ENCODE measurements at regions of chr4 and their contacts with region 1.

Region 1: DNA sequence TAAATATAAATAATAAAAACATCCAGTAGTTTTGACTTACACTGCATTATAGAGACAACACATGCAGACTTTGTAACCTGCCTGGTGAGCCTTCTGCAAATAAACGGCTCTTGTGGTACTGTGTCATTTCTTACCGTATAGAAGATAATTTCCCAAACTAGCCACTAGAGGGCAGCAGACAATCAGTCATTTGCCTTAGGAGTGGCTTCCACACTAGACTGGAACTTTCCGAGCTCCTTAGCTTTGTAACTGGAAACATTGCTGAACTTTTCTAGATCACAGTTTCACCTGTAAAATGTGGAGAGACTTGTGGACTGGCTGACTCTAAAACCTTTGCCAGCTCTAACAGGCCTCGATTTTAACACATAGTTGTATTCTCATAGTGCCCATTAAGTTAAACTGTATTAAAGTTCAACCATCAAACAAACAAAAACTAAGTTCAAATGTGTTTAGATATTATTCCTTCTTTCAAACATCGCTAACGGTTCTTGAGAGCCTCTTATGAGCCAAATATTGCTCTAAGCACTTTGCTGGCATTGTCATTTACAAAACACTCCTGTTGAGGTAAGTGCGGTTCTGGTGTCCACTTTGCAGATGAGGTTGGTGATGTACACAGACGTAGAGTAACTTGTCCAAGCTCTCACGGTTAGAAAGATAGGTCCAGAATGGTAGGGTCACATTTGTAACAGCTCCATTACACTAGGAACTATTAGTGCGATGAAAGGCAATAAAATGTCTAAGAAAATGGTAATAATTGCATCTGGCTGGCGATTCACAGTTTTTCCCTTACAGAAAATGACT is 345.5 kb downstream of the ANK2 start:
- DNase-seq: peak in 3 of 10 donors; percentile 18 to 50 (median 43)

Region 2: GRCh38 chr4:112795112-112795511 is 599.8 kb before region 1 on chr4:
- intact Hi-C with region 1: no loop called
- DNase-seq: no peak

Region 3: DNA sequence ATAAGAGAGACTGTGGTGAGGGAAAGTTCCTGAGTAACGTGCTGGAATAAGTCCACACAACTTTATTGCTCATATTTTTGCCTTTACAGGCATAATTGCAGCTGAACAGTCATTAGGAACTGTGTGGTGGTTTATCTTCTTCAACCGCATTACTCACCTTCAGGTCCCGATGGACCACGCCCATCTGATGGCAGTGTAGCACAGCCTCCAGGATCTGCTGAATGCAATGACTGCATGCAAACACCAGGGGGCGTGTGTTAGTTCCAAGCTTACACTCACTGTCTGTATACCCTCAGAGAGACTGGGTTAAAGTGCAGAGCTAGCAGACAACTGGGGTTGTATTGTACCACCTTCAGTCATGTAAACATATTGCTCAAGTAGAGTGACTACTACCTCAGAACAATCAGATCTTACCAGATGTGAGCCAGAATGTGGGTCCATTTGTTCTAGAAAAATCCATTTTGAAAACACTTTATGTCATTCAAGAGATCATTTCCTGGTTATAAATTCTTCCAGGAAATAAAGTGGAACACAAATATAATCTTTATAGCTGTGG is 152.6 kb after region 1 on chr4:
- intact Hi-C with region 1: loop called (anchors 2 kb)
- DNase-seq: peak; percentile 51 to 96 (median 80)

Region 4: GRCh38 chr4:113761620-113762185 is 366.8 kb after region 1 on chr4 and contains the start of gene CAMK2D:
- intact Hi-C with region 1: loop called (anchors 5 kb)
- DNase-seq: peak; percentile 83 to 98 (median 88)

Region 5: DNA sequence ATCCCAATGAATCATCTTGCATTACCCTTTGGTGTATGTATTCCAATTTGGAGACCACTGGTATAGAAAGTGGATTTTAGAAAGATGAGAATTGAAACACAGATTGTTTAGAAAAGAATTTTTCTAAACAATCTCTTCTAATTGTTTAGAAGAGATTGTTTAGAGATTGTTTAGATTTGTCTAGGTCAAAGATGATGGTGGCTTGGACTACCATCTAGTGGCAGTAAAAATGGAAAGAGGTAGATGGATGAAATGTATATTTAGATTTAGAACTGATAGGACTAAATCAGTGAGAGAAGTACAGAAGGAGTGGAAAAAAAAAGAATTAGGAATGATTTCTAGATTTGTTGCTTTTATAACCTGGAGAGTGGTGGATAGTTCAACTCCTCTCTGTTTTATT is 513.9 kb after region 1 on chr4:
- intact Hi-C with region 1: loop called (anchors 5 kb)
- DNase-seq: no peak

Region 6: GRCh38 chr4:114180481-114180880 is 785.6 kb after region 1 on chr4:
- intact Hi-C with region 1: loop called (anchors 10 kb)
- DNase-seq: peak in 7 of 10 donors; percentile 4 to 83 (median 42)

Region 7: DNA sequence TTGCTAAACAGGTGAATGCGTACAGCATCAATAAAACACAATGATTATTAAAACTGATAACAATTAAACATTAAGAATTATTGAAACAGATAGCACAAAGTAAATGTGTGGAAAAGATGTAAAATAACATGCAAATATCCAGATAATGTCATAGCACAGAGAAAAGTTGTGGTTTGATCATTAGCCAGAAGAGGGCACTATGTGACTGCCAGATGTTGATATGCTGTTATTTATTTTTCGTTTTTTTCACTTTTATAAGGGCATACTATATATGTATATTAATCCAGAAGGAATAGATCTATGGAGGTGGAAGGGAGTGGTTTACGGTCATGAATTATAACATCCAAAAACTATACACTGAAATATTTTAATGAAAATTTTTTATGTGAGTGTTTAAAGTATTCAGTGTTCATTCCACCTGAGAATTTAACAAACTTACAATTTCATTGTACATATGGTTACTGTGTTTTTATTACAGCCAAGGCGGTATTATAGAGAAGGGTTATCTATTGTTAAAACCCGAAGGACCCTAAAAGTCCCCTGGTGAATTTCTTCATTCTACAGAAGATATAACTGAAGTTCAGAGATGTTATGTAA is 991.8 kb after region 1 on chr4:
- intact Hi-C with region 1: loop called (anchors 5 kb)
- DNase-seq: no peak